Lower leg skin (tissue), 4 donors: ENCODE measurements at regions of chr19 and their contacts with region 1.

Region 1: DNA sequence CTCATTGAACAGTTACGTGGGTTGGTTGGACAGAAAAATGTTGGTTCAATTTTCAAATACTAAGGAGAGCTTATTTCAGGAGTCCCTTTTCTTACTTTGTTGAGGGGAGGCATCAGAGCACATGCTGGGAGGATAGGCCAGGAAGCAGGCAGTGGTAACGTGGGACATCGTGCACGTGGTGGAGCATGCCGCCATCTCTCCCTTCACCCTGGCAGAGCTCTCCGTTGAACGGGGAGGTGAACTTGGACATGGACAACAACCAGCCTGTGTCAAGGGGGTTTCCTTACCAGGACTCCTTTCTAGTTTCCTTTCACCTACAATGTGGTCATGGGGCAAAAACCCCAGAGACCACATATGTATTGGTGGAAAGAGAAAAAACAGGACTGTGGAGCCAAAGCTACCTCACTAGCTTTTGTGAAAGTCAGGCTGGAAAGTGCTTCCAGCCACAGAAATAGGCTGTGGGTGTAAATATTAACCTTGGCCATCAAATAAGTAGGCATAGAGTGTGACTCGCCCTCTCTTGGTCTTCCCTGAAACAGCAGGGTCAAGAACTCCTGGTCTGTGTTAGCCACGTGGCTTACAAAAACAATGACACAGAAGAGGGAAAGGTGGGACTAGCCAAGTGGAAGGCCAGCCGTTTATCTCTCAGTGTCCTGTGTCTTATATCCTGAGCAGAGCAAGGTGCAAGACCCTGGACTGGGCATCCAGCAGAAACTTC is 14.4 kb downstream of the MICOS13 start:
- DNase-seq: no peak
- H3K4me3 ChIP-seq: no peak overlapping the region
- CTCF ChIP-seq: no peak
- POLR2A ChIP-seq: no peak

Region 2: GRCh38 chr19:5615756-5616332 is 50.1 kb before region 1 on chr19:
- intact Hi-C with region 1: loop called (anchors 10 kb)
- DNase-seq: peak in 1 of 2 donors; percentile 50
- H3K4me3 ChIP-seq: no peak overlapping the region
- CTCF ChIP-seq: no peak
- POLR2A ChIP-seq: no peak